Uterus (tissue), 4 donors: ENCODE measurements at regions of chr11 and their contacts with region 1.

Region 1: DNA sequence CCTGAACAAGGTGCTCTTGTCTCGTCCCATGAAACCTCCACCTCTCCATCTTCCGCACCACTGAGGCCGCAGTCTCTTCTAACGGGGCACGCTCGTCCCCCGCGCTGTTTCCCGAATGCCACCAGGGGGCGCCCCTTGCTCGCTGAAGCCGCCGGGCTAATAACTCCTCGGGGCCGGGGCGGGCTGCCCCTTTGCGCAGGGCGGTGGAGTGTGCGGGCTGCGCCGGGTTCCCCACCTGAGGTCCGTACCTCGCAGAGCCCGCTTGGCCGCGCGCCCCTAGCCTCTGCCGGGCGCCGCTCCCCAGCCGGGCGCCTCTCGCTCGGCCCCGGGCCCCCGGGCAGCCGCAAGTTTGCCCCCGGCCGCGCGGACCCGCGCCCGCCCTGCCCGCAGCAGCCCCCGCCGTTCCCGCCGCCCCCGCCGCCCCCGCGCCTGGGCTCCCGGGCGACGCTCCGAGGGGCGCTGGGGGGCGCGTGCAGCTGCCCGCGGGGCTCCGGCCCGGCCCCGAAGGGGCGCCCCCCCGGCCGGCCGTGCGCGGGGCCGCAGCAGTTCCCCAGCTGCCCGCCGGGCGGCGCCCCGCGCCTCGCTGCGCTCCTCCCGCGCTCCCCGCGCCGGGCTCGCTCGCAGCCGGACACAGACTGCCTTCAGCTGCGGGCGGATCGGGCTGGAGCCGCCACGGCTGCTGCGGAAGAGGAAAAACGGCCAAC is at the start of gene GRIK4:
- DNase-seq: peak; percentile 81 to 84
- H3K4me3 ChIP-seq: peak within 1 kb of the TSS; percentile 10 to 44
- H3K27ac ChIP-seq: no peak within 1 kb of the TSS
- H3K4me1 ChIP-seq: no peaks in the 10 kb centered on the region
- H3K27me3 ChIP-seq: no peaks in the 10 kb centered on the region
- CTCF ChIP-seq: peak; percentile 93 to 96 (median 94)
- POLR2A ChIP-seq: peak in 1 of 2 donors; percentile 12
- total RNA-seq, gene GRIK4: 0.28 to 1.1 TPM in 2 of 4 donors, not detected in the others

Region 2: DNA sequence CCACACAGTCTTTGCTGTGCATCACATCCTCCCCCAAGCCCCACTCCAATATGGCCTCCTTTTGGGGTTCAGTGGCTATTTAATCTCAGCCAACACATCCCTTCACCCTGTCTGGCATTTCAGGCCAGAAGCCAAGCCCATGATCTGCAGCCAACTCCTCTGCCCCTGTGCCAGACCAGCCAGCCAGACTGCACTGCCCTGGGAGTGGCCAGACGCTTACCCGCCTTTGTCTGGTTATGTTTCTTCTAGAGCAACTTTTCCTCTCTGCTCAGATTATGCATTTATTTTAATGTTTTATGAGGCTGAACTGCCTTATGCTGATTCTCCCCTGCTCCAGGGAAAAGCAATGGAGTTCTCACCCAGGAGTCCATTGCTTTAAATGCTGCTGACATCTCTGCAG is 305.9 kb after region 1 on chr11:
- intact Hi-C with region 1: loop called (anchors 10 kb)
- DNase-seq: no peak
- H3K4me3 ChIP-seq: no peak overlapping the region
- H3K27ac ChIP-seq: no peak overlapping the region
- H3K4me1 ChIP-seq: no peaks in the 10 kb centered on the region
- H3K27me3 ChIP-seq: no peaks in the 10 kb centered on the region
- CTCF ChIP-seq: no peak
- POLR2A ChIP-seq: no peak